H1 (cell line): ENCODE measurements at regions of chr17 and their contacts with region 1.

Region 1: DNA sequence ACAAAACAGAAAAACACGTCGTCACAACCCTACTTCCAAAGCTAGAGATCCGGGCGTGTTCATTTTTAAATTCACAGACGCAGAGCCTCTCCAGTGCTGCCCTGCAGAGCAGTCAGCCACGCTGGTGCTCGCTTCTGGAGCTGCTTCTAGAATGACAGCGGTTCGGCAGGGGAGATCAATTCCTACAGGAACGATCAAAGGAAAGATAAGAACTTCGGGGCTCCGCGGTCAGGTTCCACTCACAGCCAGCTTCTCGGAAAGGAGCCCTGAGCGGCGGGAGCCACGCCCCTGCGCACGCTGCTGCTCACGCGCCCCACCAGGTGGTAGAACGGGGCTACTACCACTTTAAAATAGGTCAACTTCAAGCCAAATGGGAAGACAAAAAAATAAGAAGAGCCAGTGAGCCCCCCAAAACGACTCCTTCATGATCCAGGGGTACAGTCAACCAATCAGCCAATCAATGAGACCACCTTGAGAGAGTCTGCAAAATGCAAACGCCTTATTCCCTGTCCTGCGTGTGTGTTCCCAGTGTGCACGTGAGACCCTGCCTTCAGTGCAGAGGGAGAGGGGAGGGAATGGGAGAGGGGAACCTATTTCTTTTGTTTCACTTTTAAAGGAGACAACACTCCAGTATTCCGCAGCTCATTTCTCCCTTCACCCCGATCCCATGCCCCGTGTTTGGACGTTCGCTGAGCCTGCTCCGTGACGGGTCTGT is 209.7 kb downstream of the RBFOX3 start:
- DNase-seq: peak; percentile 47 to 90
- H3K4me3 ChIP-seq: peak overlapping the region; percentile 32 to 59 (median 46); a peak in 7 of 8 replicates
- H3K27ac ChIP-seq: no peak overlapping the region
- H3K4me1 ChIP-seq: peaks cover 0 to 8% (median 5%) of the 10 kb centered on the region in 4 experiments; a peak in 6 of 7 replicates
- H3K27me3 ChIP-seq: peaks cover 0 to 24% (median 15%) of the 10 kb centered on the region in 4 experiments; a peak in 6 of 7 replicates
- CTCF ChIP-seq: peak; percentile 68 to 80 (median 70)
- EP300 ChIP-seq: no peak
- POLR2A ChIP-seq: no peak
- RAD21 ChIP-seq: peak; percentile 55 to 58

Region 2: GRCh38 chr17:79372470-79373238 is 28.5 kb before region 1 on chr17:
- CTCF ChIA-PET with region 1: interaction called, 13 read pairs
- POLR2A ChIA-PET with region 1: no interaction called
- DNase-seq: no peak
- H3K4me3 ChIP-seq: no peak overlapping the region
- H3K27ac ChIP-seq: no peak overlapping the region
- H3K4me1 ChIP-seq: peaks cover 0 to 3% (median 2%) of the 10 kb centered on the region in 4 experiments; a peak in 2 of 7 replicates
- H3K27me3 ChIP-seq: no peaks in the 10 kb centered on the region
- CTCF ChIP-seq: no peak
- EP300 ChIP-seq: no peak
- POLR2A ChIP-seq: no peak
- RAD21 ChIP-seq: no peak

Region 3: DNA sequence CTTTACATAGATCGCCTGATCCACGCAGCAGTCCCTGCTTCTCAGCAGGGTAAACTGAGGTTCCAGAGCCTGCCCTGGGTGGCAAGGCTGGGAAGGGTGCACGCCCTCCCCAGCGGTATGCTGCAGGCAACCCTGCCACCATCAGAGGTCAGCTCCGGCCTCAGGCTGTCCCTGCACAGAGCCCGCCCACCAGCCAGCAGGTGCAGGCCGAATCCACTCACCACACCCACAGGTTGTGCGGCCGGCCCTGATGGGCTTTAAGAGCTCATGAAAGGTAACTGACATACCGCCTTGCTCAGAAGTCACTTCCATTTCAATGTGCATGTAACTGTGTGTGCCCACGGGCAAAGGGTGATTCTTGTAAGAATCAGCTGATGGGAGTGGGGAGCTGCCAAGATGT is 202.6 kb after region 1 on chr17:
- CTCF ChIA-PET with region 1: interaction called, 10 read pairs
- POLR2A ChIA-PET with region 1: no interaction called
- DNase-seq: no peak
- H3K4me3 ChIP-seq: no peak overlapping the region
- H3K27ac ChIP-seq: no peak overlapping the region
- H3K4me1 ChIP-seq: peaks cover 5 to 12% (median 9%) of the 10 kb centered on the region in 4 experiments
- H3K27me3 ChIP-seq: peaks cover 4 to 20% (median 16%) of the 10 kb centered on the region in 4 experiments
- CTCF ChIP-seq: no peak
- EP300 ChIP-seq: no peak
- POLR2A ChIP-seq: no peak
- RAD21 ChIP-seq: no peak

Region 4: GRCh38 chr17:79658811-79659207 is 257.7 kb after region 1 on chr17:
- CTCF ChIA-PET with region 1: interaction called, 15 read pairs
- POLR2A ChIA-PET with region 1: no interaction called
- DNase-seq: peak in 1 of 2 experiments; percentile 64
- H3K4me3 ChIP-seq: no peak overlapping the region
- H3K27ac ChIP-seq: no peak overlapping the region
- H3K4me1 ChIP-seq: peaks cover 0 to 6% (median 4%) of the 10 kb centered on the region in 4 experiments; a peak in 5 of 7 replicates
- H3K27me3 ChIP-seq: no peaks in the 10 kb centered on the region; a peak in 1 of 7 replicates
- CTCF ChIP-seq: peak; percentile 57 to 87 (median 86)
- EP300 ChIP-seq: no peak
- POLR2A ChIP-seq: no peak
- RAD21 ChIP-seq: peak; percentile 56 to 66